ENCODE measurements at regions of chr1 and their contacts with region 1.

Region 1: GRCh38 chr1:116232989-116233514 is 121.9 kb downstream of the MAB21L3 start:
- DNase-seq: peak in 7 of 9 donors; percentile 29 to 66 (median 52)
- ATAC-seq: peak; percentile 82
- H3K4me3 ChIP-seq: no peak overlapping the region
- H3K4me3 Mint-ChIP-seq: peak overlapping the region in 6 of 10 donors; percentile 1 to 73 (median 26)
- H3K27ac ChIP-seq: no peak overlapping the region
- H3K27ac Mint-ChIP-seq: peak overlapping the region in 7 of 9 donors; percentile 5 to 90 (median 69)
- H3K4me1 ChIP-seq: peaks cover 4 to 10% of the 10 kb centered on the region in 2 donors
- H3K4me1 Mint-ChIP-seq: peaks cover 6 to 29% (median 25%) of the 10 kb centered on the region in 7 donors
- H3K27me3 ChIP-seq: no peaks in the 10 kb centered on the region
- H3K27me3 Mint-ChIP-seq: peaks cover 0 to 19% (median 0%) of the 10 kb centered on the region in 5 donors

Region 2: DNA sequence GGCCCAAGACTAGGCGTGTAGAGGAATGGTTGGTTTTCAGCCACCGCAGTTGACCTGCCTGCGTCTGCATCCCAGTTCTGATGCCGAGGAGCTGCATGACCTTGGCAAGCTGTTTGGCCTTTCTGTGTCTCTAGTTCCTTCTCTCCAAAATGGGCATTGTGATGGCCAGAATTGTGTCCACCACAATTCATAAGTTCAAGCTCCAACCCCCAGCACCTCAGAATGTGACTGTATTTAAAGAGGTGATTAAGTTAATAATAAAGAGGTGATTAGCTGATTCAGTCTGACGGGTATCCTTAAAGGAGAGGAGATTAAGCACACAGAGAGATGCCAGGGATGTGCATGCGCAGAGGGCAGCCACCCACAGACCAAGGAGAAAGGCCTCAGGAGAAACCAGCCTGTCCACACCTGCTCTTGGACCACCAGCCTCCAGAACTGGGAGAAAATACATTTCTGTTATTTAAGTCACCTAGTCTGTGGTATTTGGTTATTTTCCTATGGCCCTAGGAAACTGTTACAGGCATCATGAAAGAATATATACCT is 93.4 kb before region 1 on chr1:
- CTCF ChIA-PET with region 1: interaction called, 13 read pairs
- POLR2A ChIA-PET with region 1: no interaction called
- intact Hi-C with region 1: loop called in 1 of 2 experiments (anchors 1 kb)
- DNase-seq: no peak
- ATAC-seq: no peak
- H3K4me3 ChIP-seq: no peak overlapping the region
- H3K4me3 Mint-ChIP-seq: no peak overlapping the region
- H3K27ac ChIP-seq: no peak overlapping the region
- H3K27ac Mint-ChIP-seq: no peak overlapping the region
- H3K4me1 ChIP-seq: no peaks in the 10 kb centered on the region
- H3K4me1 Mint-ChIP-seq: peaks cover 0 to 10% (median 5%) of the 10 kb centered on the region in 7 donors
- H3K27me3 ChIP-seq: no peaks in the 10 kb centered on the region
- H3K27me3 Mint-ChIP-seq: peaks cover 0 to 26% (median 5%) of the 10 kb centered on the region in 5 donors

Region 3: GRCh38 chr1:116151739-116152576 is 81.1 kb before region 1 on chr1:
- CTCF ChIA-PET with region 1: interaction called, 4 read pairs
- POLR2A ChIA-PET with region 1: no interaction called
- intact Hi-C with region 1: loop called in 1 of 2 experiments (anchors 1 kb)
- DNase-seq: peak; percentile 61 to 89 (median 76)
- ATAC-seq: peak; percentile 97
- H3K4me3 ChIP-seq: peak overlapping the region; percentile 48
- H3K4me3 Mint-ChIP-seq: peak overlapping the region; percentile 70 to 87 (median 82)
- H3K27ac ChIP-seq: peak overlapping the region; percentile 74
- H3K27ac Mint-ChIP-seq: peak overlapping the region; percentile 63 to 98 (median 92)
- H3K4me1 ChIP-seq: peaks cover 7 to 21% of the 10 kb centered on the region in 2 donors
- H3K4me1 Mint-ChIP-seq: peaks cover 9 to 32% (median 25%) of the 10 kb centered on the region in 7 donors
- H3K27me3 ChIP-seq: no peaks in the 10 kb centered on the region
- H3K27me3 Mint-ChIP-seq: peaks cover 0 to 31% (median 0%) of the 10 kb centered on the region in 5 donors

Region 4: DNA sequence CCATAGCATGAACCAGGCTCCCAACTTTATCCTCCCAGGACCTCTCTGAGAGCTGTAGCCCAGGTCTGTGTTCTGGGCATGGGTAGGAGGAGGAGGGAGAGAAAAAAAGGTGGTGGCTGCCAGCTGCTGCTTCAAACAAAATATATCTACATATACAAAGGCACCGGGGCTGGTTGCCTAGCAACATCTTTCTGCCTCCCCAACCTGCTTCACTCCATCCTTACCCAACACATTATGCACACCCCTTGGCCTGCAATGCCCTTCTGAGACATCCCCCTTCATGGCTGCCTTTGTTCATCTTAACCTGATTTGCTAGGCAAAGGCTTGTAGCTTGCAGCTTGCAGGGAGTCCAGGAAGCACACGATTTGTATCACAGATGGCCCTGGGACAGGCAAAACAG is 112.8 kb after region 1 on chr1:
- CTCF ChIA-PET with region 1: interaction called, 4 read pairs
- POLR2A ChIA-PET with region 1: no interaction called
- intact Hi-C with region 1: loop called in 1 of 2 experiments (anchors 1 kb)
- DNase-seq: peak in 8 of 9 donors; percentile 17 to 89 (median 86)
- ATAC-seq: peak; percentile 93
- H3K4me3 ChIP-seq: no peak overlapping the region
- H3K4me3 Mint-ChIP-seq: peak overlapping the region in 9 of 10 donors; percentile 18 to 77 (median 70)
- H3K27ac ChIP-seq: peak overlapping the region; percentile 72
- H3K27ac Mint-ChIP-seq: peak overlapping the region in 8 of 9 donors; percentile 89 to 98 (median 92)
- H3K4me1 ChIP-seq: peaks cover 9 to 83% of the 10 kb centered on the region in 2 donors
- H3K4me1 Mint-ChIP-seq: peaks cover 10 to 93% (median 89%) of the 10 kb centered on the region in 7 donors
- H3K27me3 ChIP-seq: no peaks in the 10 kb centered on the region
- H3K27me3 Mint-ChIP-seq: peaks cover 0 to 3% (median 0%) of the 10 kb centered on the region in 5 donors

Region 5: DNA sequence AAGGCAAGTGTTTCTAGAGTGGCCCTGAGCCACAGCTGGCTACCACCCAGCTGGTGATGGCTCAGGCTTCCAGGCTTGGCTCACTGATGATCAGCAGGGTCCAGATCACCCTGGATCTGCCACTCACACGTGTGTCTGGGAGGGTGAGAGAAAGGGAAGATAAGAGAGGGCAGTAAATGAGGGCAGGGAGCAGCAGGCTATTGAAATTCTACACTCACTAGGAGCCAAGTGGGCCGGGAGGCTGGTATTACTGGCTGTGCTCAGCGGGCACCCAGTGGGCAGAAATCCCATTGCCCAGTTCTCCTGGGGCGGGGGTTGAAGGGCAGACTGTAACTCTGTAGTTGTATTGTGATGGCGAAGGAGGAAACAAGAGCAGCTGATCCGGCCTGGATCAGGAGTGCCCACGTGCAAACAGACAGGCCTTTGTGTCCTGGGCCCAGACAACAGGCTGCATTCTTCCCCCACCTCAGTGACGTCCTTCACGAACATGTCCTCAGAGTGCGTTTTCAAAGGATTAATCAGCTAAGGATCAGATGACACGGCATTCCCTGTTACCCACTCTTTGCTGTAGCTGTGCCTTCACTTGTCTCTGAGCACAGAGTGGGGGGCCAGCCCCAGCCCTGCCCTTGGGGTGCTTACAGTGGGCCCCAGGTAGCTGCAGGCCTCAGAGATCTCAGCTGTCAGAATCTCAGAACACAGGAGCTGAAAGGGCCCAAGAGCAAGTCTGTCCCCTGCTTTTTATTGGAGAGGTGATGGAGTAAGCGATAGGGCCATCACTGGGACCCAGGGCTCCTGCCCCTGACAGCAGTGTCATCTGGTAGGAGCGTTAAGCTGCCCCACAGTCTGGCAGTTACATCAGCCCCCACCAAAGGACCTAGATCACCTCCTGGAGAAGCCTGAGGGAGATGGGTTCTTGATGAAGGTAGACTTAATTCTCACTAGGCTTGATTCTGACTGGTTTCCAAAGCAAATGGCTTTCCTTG is 200.5 kb after region 1 on chr1:
- CTCF ChIA-PET with region 1: no interaction called
- POLR2A ChIA-PET with region 1: no interaction called
- intact Hi-C with region 1: loop called in 1 of 2 experiments (anchors 1 kb)
- DNase-seq: no peak
- ATAC-seq: peak; percentile 26
- H3K4me3 ChIP-seq: no peak overlapping the region
- H3K4me3 Mint-ChIP-seq: no peak overlapping the region
- H3K27ac ChIP-seq: no peak overlapping the region
- H3K27ac Mint-ChIP-seq: no peak overlapping the region
- H3K4me1 ChIP-seq: no peaks in the 10 kb centered on the region
- H3K4me1 Mint-ChIP-seq: no peaks in the 10 kb centered on the region
- H3K27me3 ChIP-seq: no peaks in the 10 kb centered on the region
- H3K27me3 Mint-ChIP-seq: peaks cover 0 to 19% (median 0%) of the 10 kb centered on the region in 5 donors

Region 6: GRCh38 chr1:116485071-116485735 is 252.2 kb after region 1 on chr1:
- CTCF ChIA-PET with region 1: interaction called, 164 read pairs
- POLR2A ChIA-PET with region 1: interaction called, 5 read pairs
- intact Hi-C with region 1: loop called (anchors 1 kb)
- DNase-seq: peak; percentile 59 to 84 (median 76)
- ATAC-seq: peak; percentile 93
- H3K4me3 ChIP-seq: no peak overlapping the region
- H3K4me3 Mint-ChIP-seq: no peak overlapping the region
- H3K27ac ChIP-seq: no peak overlapping the region
- H3K27ac Mint-ChIP-seq: peak overlapping the region in 1 of 9 donors; percentile 21
- H3K4me1 ChIP-seq: no peaks in the 10 kb centered on the region
- H3K4me1 Mint-ChIP-seq: peaks cover 0 to 15% (median 0%) of the 10 kb centered on the region in 7 donors
- H3K27me3 ChIP-seq: no peaks in the 10 kb centered on the region
- H3K27me3 Mint-ChIP-seq: peaks cover 0 to 8% (median 0%) of the 10 kb centered on the region in 5 donors

Region 7: DNA sequence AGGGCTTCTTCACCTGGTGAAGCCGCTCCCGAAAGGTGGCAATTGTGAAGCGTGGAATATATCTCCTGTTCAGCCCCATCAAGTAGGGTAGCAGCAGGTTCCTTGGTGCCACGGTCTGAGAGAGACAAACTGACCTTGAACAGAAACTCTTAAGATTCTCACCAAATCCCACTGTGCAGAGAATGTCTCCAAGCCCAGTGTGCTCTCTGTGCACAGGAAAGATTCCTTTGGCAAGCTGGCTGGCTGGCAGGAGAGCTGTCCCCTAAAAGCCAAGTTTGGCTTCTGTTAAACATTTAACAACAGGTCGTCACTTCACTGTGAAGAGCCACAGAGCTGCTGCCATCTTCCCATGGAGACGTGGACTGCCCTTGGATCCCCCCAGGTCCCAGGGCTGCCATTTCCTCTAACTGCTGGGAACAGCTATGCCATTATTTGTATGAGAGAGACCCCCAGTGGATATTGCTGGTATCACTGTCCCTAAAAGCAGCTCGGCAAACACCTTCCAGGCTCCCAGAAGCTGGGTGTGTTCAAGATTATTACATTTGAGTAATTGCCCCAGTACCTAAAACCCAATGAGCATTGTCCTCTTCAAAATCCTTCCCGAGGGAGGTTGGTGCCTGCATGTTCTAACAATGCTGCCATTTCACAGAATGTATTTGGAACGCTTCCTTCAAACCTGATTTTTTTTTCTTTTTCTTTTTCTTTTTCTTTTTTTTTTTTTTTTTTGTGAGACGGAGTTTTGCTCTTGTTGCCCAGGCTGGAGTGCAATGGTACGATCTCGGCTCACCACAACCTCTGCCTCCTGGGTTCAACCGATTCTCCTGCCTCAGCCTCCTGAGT is 266.0 kb after region 1 on chr1:
- CTCF ChIA-PET with region 1: interaction called, 3 read pairs
- POLR2A ChIA-PET with region 1: no interaction called
- intact Hi-C with region 1: loop called in 1 of 2 experiments (anchors 1 kb)
- DNase-seq: peak in 8 of 9 donors; percentile 20 to 58 (median 44)
- ATAC-seq: peak; percentile 82
- H3K4me3 ChIP-seq: no peak overlapping the region
- H3K4me3 Mint-ChIP-seq: peak overlapping the region in 1 of 10 donors; percentile 13
- H3K27ac ChIP-seq: no peak overlapping the region
- H3K27ac Mint-ChIP-seq: peak overlapping the region in 3 of 9 donors; percentile 21 to 36 (median 28)
- H3K4me1 ChIP-seq: peaks cover 8 to 16% of the 10 kb centered on the region in 2 donors
- H3K4me1 Mint-ChIP-seq: peaks cover 20 to 66% (median 24%) of the 10 kb centered on the region in 7 donors
- H3K27me3 ChIP-seq: no peaks in the 10 kb centered on the region
- H3K27me3 Mint-ChIP-seq: no peaks in the 10 kb centered on the region

Region 8: DNA sequence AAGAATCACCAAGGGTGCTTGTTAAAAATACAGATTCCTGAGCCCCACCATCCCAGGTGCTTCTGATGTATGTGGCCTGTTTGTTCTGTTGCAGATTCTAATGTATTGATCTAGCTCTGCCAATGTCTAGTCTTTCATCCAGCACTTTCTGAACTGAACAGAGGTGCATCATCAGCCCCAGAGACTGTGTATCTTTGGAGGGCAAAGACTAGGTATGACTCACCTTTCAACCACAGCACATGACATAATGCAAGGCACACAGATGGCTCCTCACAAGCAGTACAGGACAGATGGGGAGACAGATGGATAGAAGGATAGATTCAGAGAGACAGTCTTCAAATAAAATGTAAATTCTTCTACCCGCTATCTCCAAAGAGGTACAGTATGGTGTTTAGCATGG is 305.5 kb after region 1 on chr1:
- CTCF ChIA-PET with region 1: no interaction called
- POLR2A ChIA-PET with region 1: no interaction called
- intact Hi-C with region 1: no loop called
- DNase-seq: peak in 1 of 9 donors; percentile 46
- ATAC-seq: peak; percentile 22
- H3K4me3 ChIP-seq: no peak overlapping the region
- H3K4me3 Mint-ChIP-seq: peak overlapping the region in 1 of 10 donors; percentile 3
- H3K27ac ChIP-seq: no peak overlapping the region
- H3K27ac Mint-ChIP-seq: peak overlapping the region in 1 of 9 donors; percentile 56
- H3K4me1 ChIP-seq: peaks cover 0 to 12% of the 10 kb centered on the region in 2 donors
- H3K4me1 Mint-ChIP-seq: peaks cover 3 to 55% (median 7%) of the 10 kb centered on the region in 7 donors
- H3K27me3 ChIP-seq: no peaks in the 10 kb centered on the region
- H3K27me3 Mint-ChIP-seq: no peaks in the 10 kb centered on the region